ENCODE measurements at regions of chr9 and their contacts with region 1.

Region 1: DNA sequence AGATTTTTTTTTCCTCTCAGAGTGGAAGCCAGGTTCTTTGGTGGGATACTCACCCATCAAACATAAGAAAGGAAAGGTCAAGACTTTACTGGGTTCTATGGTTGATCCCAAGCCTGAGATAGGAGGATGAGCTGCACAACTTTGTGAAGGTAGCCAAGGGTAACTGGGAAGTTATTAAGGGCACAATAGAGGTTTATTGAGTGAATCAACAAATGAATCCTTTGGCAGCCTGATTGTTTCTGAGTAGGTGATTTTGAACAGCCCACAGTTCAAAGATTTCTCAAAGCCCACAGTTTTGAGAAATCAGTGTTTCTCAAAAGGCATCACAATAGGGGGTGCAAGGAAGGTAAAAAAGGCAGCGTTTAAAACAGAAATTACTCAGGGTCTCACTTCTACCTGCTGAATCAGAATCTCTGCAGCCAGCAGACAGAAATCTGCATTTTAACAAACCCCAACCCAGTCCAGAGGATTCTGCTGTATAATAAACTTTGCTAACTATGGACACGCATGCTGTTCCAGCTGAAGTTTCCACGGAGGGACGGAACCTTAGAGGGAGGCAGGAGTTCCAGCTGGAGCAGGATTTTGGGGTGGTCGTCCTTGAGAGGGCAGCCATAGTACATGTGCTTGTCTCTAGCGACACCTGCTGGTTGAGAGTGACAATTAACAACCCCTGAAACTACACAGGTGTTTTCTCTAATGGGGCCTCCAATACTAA is 32.7 kb upstream of the FSD1L start:
- DNase-seq: peak; percentile 68
- CTCF ChIP-seq: peak; percentile 62

Region 2: DNA sequence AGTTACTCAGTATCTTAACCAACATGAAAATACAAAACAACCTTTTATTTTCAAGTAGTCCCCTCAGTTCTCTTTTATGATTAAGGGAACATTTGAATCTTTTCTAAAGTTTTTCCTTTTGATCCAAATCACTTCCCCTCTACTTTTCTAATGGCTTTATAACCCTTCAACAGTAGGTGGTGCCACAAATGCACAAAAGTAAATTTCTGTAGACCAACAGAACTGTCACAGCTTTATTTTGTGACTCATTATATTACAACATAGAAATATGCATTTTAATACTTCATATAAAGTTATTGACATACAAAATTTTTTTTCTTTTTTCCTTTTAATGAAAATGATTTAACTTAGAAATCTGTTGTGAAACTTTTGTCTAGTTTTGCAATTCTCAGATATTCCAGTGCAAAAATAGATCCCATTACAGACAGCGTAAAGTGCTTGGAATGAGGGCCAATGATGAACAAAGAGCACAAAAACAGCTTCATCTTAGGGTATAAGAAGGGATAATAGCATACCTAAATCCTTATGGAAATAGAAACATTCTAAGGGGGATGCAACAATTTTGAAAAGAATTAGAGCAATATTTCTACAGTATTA is 634.2 kb before region 1 on chr9:
- in situ Hi-C with region 1: loop called (anchors 25 kb)
- DNase-seq: peak; percentile 14
- CTCF ChIP-seq: peak; percentile 47

Region 3: GRCh38 chr9:104863180-104863883 is 551.8 kb before region 1 on chr9:
- in situ Hi-C with region 1: loop called (anchors 25 kb)
- DNase-seq: peak; percentile 75
- CTCF ChIP-seq: peak; percentile 78

Measured in GM13976 (cell line).